Activated CD8-positive, alpha-beta T cell treated with anti-CD3 and anti-CD28 coated beads, Interleukin-2, amount 10 ng/mL, durations not matched to agents 7 days and 5 days (primary cell): ENCODE measurements at regions of chr12 and their contacts with region 1.

Region 1: DNA sequence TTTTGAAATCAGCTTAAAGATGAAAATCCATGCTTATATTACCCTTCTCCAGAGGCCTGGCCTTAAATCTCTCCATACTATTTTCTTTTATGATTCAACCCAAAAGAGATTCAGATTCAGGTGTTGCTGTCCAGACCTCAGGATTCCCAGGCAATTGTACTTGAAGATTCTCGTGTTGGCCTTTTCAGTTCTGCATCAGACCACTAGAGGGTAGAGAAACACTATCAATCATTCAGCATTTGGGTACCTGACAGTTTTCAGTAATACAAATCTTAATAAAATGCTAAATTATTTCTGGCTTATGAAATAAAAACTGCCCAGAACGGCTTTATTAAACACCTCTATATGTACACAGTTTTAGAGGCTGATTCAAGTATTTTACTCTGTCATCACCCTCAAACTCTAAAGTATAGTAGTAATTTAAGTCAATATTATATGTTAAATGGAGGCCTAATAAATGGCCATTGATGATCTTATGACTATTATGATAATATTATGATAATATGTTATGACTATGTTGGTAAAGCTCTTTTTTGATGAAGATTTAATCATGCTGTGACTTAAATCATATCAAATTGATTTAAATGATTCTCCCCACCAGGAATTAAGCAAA is 301.1 kb downstream of the DUSP6 start:
- DNase-seq: peak; percentile 55
- ATAC-seq: peak; percentile 77
- H3K4me3 Mint-ChIP-seq: no peak overlapping the region
- H3K27ac Mint-ChIP-seq: no peak overlapping the region
- H3K4me1 Mint-ChIP-seq: peaks cover 32% of the 10 kb centered on the region
- H3K27me3 Mint-ChIP-seq: no peaks in the 10 kb centered on the region

Region 2: GRCh38 chr12:89345830-89346740 is 294.9 kb after region 1 on chr12:
- CTCF ChIA-PET with region 1: interaction called, 16 read pairs
- POLR2A ChIA-PET with region 1: interaction called, 3 read pairs
- DNase-seq: peak; percentile 76
- ATAC-seq: peak; percentile 70
- H3K4me3 Mint-ChIP-seq: peak overlapping the region; percentile 98
- H3K27ac Mint-ChIP-seq: peak overlapping the region; percentile 92
- H3K4me1 Mint-ChIP-seq: peaks cover 56% of the 10 kb centered on the region
- H3K27me3 Mint-ChIP-seq: no peaks in the 10 kb centered on the region

Region 3: DNA sequence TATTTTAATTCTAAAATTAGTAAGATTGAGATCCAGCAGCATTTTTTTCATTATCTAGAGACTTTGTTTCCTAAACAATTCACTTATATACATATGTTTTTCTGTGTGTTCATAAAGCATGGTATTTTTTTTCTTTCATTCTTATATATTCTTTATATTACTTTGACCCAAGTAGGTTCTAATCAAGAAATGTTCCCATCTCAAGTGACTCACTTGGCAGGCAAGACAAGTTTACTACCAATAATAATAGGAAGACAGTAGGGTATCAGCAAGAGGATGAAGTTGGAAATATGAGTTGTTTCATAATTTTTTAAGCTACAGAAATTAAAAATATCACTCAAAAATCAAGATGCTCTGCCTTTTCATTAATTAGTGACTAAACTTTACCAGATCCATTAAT is 1270.8 kb after region 1 on chr12:
- CTCF ChIA-PET with region 1: no interaction called
- POLR2A ChIA-PET with region 1: no interaction called
- DNase-seq: no peak
- ATAC-seq: no peak
- H3K4me3 Mint-ChIP-seq: no peak overlapping the region
- H3K27ac Mint-ChIP-seq: no peak overlapping the region
- H3K4me1 Mint-ChIP-seq: no peaks in the 10 kb centered on the region
- H3K27me3 Mint-ChIP-seq: peaks cover 2% of the 10 kb centered on the region